ENCODE measurements at regions of chr16 and their contacts with region 1.

Region 1: DNA sequence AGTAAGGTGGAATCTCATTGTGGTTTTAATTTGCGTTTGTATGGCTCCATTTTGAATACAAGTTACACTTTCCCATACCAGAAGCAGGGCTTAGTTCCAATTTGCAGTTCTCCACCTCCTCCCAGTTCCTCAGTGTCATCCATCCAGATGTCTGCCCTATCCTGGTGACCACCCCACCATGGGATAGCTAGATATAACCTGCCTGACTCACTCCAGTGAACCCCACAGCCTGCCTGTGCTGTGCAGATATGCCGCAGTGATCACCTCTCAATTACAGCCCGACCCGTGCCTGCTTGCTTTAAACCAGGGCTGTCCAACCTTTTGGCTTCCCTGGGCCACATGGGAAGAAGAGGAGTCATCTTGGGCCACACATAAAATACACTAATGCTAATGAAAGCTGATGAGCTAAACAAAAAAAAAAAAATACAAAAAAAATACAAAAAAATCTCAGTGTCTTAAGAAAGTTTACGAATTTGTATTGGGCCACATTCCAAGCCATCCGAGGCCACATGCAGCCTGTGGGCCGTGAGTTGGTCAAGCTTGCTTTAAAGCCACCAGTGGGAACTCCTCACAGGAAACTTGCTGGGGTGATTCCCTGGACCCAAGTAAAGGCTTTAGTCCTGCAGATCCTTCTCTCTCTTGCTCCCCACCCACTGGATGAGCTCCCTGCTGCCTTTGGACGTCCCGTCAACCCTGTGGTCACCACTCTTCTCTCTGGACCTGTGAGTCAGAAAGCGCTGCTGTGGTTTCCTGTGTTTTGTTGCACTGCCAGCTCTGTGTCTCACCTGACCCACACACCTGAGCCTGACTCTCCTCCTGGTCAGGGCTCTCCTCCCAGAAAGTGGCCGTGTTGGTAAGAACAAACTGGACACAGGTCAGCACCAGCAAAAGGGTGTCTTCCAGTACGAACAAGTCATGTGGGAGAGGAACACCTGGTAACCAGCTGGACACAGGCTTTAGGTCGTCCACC is 83.0 kb downstream of the EMP2 start:
- DNase-seq: no peak
- H3K4me3 ChIP-seq: no peak overlapping the region
- H3K27ac ChIP-seq: no peak overlapping the region
- H3K4me1 ChIP-seq: no peaks in the 10 kb centered on the region
- H3K27me3 ChIP-seq: no peaks in the 10 kb centered on the region
- CTCF ChIP-seq: no peak
- POLR2A ChIP-seq: no peak

Region 2: DNA sequence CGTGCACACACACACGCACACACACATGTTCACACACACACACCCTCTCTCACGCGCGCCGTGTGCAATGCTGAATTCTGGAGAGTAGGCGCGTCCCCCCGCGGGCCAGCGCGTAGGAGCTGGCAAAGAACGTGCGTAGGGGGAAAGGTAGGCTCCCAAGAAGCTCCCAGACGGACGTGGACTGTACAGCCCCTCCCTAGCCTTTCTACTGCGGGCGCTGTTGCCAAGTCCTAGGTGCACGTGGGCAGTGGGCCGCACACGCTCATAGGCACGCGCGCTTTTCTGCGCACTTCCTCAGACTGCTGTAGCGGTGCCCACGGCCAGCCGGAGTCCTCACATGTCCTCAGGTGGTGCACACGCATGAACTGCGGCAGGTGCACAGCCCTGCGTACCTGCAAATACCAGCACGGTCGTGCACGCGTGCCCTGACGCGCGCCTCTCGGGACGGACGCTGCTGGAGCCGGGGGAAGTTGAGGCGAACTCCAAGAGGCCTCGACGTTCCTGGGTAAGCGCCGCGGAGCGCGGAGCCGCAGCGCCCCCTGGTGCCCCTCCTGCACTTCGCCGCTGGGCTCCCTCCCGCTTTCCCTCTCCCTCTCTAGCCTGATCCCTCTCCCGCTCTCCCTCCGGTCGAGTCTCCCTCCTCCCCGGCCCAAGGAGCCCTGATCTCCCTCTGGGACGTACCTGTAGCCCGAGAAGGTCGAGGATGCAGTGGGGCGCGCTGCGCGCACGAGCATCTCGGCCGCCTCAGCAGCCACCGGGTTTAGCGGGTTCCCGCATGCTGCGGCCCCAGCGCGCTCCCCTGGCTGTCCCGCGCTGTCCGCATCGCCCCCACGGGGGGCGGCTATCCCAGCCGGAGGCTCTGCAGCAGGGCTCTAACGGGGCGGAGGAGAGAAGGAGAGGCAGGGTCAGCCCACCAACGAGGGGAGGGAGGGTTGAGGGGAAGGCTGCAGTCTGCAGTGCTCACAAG is 315.9 kb before region 1 on chr16:
- intact Hi-C with region 1: no loop called
- DNase-seq: peak; percentile 40 to 84 (median 59)
- H3K4me3 ChIP-seq: peak overlapping the region in 1 of 4 donors; percentile 34
- H3K27ac ChIP-seq: peak overlapping the region in 1 of 5 donors; percentile 41
- H3K4me1 ChIP-seq: no peaks in the 10 kb centered on the region
- H3K27me3 ChIP-seq: peaks cover 32% of the 10 kb centered on the region
- CTCF ChIP-seq: peak; percentile 66 to 89 (median 84)
- POLR2A ChIP-seq: no peak

Region 3: GRCh38 chr16:10390330-10390729 is 107.1 kb before region 1 on chr16:
- intact Hi-C with region 1: loop called in 1 of 2 experiments (anchors 10 kb)
- DNase-seq: no peak
- H3K4me3 ChIP-seq: no peak overlapping the region
- H3K27ac ChIP-seq: no peak overlapping the region
- H3K4me1 ChIP-seq: peaks cover 19 to 26% of the 10 kb centered on the region in 2 donors
- H3K27me3 ChIP-seq: no peaks in the 10 kb centered on the region
- CTCF ChIP-seq: no peak
- POLR2A ChIP-seq: no peak

Region 4: GRCh38 chr16:10629587-10629963 is 132.2 kb after region 1 on chr16:
- intact Hi-C with region 1: no loop called
- DNase-seq: no peak
- H3K4me3 ChIP-seq: no peak overlapping the region
- H3K27ac ChIP-seq: no peak overlapping the region
- H3K4me1 ChIP-seq: no peaks in the 10 kb centered on the region
- H3K27me3 ChIP-seq: no peaks in the 10 kb centered on the region
- CTCF ChIP-seq: no peak
- POLR2A ChIP-seq: no peak

Measured in adrenal gland (tissue), 19 donors.